ENCODE measurements at regions of chr13 and their contacts with region 1.

Region 1: DNA sequence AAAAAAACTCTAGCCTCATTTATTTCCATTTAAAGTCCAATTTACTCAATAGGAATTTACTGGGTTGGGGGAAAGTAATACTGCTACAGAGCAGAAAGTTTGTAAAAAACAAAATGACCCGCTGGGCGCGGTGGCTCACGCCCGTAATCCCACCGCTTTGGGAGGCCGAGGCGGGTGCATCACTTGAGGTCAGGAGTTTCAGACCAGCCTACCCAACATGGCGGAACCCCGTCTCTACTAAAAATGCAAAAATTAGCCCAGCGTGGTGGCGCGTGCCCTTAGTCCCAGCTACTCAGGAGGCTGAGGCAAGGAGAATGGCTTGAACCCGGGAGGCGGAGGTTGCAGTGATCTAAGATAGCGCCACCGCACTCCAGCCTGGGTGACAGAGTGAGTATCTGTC is 745.6 kb downstream of the SLITRK1 start:
- DNase-seq: no peak
- ATAC-seq: no peak

Region 2: DNA sequence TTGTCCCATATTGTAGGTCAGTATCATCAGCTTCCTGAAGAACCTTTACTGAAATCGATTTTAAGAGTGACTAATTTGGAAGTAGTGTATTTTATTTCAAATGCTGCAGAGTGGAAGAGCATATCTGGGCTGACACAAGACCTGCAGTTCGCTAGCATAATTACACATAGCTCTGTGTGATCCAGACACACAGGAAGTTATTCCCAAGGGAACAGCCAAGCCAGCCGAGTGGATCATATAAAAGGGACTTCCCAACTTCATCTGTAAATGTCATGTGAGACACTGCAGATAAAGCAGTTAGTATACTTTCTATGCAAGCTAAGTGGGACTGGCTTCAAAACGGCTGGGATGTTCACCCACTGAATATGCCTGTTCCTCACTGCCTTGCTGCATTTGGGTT is 14.8 kb before region 1 on chr13:
- intact Hi-C with region 1: loop called (anchors 1 kb)
- DNase-seq: no peak
- ATAC-seq: no peak

Region 3: DNA sequence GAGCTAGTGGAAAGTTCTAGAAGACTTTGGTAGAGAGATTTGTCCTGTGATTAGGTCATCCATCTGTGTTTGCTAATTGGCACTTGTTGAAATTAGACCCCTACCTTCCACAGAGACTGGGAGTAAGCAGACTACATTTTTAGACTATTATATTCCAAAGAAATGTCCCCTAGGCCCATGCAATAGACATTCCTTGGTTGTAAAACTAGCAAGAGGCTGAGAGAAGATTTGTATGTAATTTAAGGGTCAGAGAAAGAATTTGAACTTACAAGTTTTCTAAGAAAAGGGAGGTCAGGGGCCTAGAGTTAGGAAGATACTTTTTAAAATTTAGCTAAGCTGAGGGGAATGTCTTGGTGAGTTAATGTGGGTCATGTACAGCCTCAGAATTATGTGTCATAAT is 1216.3 kb after region 1 on chr13:
- intact Hi-C with region 1: no loop called
- DNase-seq: no peak
- ATAC-seq: no peak

Measured in Right ventricle myocardium inferior (tissue), 1 donor.